A673 (cell line): ENCODE measurements at regions of chr12 and their contacts with region 1.

Region 1: DNA sequence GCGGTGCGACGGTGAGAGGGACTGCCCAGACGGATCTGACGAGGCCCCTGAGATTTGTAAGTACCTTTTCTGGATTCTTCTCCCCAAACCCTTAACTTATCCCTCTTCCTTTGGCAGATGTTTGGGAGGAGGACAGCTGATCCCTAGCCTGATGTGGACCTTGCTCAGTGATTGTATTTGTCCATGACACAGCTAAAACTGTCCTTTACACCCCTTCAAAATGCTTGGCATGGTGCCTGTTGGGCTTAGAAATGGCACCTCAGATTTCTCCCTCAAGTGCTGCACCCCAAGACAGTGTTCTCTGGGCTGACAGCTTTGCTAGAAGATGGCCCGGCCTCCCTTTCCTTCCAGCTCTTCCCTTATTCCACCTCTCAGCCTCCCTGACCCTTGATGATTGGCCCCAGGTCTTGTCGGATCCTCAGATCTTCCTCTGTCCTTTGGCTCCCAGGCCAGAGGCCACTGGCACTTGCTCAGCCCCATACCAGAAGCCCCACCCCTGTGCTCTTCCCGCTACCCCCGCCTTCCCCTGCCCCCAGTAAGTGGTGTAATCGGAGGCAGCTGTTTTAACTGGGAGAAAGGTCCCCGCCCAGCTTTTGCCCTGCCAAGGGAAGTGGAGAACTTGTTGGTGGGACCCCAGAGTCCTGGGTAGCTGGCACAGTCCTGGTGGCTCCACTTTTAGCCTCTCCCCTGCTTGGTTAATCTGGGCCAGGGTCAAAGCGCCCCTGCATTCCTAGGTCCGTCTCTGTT is 8.7 kb downstream of the LRP1-AS start:
- DNase-seq: no peak
- H3K4me3 ChIP-seq: no peak overlapping the region
- H3K27ac ChIP-seq: no peak overlapping the region
- H3K4me1 ChIP-seq: peaks cover 11% of the 10 kb centered on the region
- H3K27me3 ChIP-seq: no peaks in the 10 kb centered on the region
- CTCF ChIP-seq: no peak

Region 2: DNA sequence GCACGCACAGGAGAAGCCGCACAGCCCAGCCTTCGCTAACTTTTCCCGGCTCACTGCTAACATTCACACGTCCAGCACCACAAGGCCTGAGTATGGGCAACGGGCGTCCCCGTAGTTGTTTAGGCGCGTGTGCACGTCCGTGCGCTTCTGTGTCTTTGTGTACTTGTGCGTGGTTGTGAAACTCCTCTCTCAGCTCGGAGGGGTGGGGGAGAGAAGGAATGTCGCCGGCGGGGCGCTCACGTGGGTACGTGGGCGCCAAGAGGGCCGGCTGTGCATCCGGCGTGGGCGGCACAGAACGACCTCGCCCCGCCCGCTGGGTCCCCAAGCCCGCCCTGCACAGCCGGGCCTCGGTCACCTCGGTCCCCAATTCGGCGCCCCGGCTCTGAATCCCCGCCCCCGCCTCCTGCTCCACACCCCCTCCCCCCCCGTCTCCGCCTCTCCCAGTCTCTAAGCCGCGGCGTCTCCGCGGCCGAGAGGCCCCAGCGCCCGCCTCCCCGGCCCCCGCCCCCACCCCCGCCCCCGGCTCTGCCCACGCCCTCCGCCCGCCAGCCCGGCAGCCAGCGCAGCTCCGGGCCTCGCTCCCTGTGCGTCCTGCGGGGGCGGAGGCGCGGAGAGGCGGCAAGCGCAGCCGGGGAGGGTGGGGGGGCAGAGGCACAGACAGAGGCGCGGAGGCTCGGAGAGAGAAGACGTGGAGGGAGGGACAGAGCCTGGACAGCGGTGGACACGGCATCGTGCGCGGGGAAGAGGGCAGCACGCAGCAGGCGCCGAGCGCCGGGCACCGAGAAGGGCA is 50.0 kb before region 1 on chr12 and contains the start of gene NAB2:
- CTCF ChIA-PET with region 1: no interaction called
- POLR2A ChIA-PET with region 1: no interaction called
- intact Hi-C with region 1: no loop called
- DNase-seq: peak; percentile 98
- H3K4me3 ChIP-seq: peak within 1 kb of the TSS; percentile 93
- H3K27ac ChIP-seq: peak within 1 kb of the TSS; percentile 100
- H3K4me1 ChIP-seq: peaks cover 51% of the 10 kb centered on the region
- H3K27me3 ChIP-seq: no peaks in the 10 kb centered on the region
- CTCF ChIP-seq: no peak
- total RNA-seq, gene NAB2: 58.0 and 61.8 TPM in 2 replicates

Region 3: DNA sequence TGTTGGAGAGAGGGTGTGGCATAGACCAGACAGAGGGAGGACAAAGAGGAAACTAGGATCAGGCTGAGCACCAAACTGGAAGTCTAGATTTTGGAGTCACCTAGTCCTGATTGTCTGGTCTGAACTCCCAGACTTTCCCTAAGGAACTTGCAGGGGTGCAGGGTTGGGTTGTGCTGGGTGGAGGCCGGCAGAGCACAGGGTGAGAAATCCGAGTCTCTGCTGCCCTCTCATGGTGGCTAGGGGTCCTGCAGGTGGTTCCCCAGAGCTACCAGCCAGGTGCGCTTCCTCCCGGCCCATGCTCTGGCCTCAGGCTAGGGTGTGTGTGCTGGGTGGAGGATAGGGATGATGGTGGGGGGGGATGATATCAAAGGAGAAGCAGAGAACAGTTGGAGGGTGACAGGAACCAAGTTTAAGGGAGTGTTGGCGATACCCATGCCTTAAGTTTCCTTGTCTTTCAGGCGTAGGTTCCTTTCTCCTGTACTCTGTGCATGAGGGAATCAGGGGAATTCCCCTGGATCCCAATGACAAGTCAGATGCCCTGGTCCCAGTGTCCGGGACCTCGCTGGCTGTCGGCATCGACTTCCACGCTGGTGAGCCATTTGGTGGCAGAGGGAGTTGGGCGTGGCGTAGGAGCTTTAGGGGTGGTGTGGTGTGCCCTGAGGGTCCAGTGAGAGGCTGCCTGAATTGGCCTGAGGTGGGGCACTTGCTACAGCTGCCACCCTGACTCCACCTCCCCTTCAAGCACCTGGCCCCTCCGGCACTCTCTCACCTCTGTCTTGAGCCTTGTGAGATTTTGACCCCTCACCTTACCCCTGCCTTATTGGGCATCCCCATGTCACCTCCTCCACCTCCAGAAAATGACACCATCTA is 44.5 kb after region 1 on chr12:
- CTCF ChIA-PET with region 1: interaction called, 12 read pairs
- POLR2A ChIA-PET with region 1: no interaction called
- intact Hi-C with region 1: no loop called
- DNase-seq: peak; percentile 79
- H3K4me3 ChIP-seq: no peak overlapping the region
- H3K27ac ChIP-seq: no peak overlapping the region
- H3K4me1 ChIP-seq: no peaks in the 10 kb centered on the region
- H3K27me3 ChIP-seq: no peaks in the 10 kb centered on the region
- CTCF ChIP-seq: peak; percentile 91